HEK293 (cell line): ENCODE measurements at regions of chr20 and their contacts with region 1.

Region 1: GRCh38 chr20:63309261-63310071 is 16.5 kb downstream of the COL20A1 start:
- H3K4me3 ChIP-seq: no peak overlapping the region
- H3K27ac ChIP-seq: no peak overlapping the region
- H3K4me1 ChIP-seq: no peaks in the 10 kb centered on the region
- CTCF ChIP-seq: peak; percentile 86

Region 2: GRCh38 chr20:63134201-63134612 is 175.3 kb before region 1 on chr20:
- CTCF ChIA-PET with region 1: no interaction called
- POLR2A ChIA-PET with region 1: no interaction called
- H3K4me3 ChIP-seq: no peak overlapping the region
- H3K27ac ChIP-seq: no peak overlapping the region
- H3K4me1 ChIP-seq: no peaks in the 10 kb centered on the region
- CTCF ChIP-seq: no peak

Region 3: DNA sequence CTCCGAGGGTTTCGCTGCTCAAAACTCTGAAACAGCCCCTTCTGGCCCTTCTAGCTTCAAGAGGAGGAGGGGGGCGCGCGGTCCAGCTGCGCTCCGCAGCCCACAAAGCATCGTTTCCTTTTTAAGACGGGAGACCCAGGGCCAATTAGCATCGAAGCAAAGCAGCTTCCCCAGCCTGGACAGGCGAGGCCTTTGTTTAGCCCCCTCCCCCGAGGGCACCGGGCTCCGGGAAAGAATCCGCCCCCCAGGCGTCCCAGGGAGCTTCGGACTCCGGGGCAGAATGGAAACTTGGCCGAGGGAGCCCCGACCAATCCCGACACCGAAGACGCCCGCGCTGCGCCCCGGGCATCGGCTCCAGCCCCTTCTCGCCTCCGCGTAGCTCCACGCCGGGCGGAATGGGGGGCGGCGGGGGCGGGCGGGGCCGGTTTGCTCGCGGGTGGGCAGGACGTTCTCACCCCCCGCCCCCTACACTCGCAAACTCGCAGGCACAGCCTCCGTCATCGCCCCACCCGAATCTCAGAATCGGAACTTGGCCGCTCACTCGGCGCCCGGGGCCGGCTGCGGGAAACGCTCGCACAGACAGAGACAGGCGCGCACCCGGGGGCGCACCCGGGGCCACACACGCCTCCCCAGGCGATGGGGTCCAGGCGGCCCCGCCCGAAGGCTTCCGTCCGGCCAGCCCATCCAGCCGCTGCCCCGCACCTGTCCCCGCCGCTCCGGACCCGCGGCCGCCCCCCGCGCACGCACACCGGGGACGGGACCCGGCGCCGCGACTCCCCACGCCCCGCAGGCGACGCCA is 55.8 kb before region 1 on chr20:
- CTCF ChIA-PET with region 1: no interaction called
- POLR2A ChIA-PET with region 1: no interaction called
- H3K4me3 ChIP-seq: peak overlapping the region; percentile 10
- H3K27ac ChIP-seq: no peak overlapping the region
- H3K4me1 ChIP-seq: no peaks in the 10 kb centered on the region
- CTCF ChIP-seq: no peak

Region 4: GRCh38 chr20:63298731-63299312 is 10.6 kb before region 1 on chr20:
- CTCF ChIA-PET with region 1: interaction called, 16 read pairs
- POLR2A ChIA-PET with region 1: no interaction called
- H3K4me3 ChIP-seq: no peak overlapping the region
- H3K27ac ChIP-seq: no peak overlapping the region
- H3K4me1 ChIP-seq: no peaks in the 10 kb centered on the region
- CTCF ChIP-seq: no peak

Region 5: GRCh38 chr20:63321136-63321831 is 11.8 kb after region 1 on chr20:
- CTCF ChIA-PET with region 1: interaction called, 16 read pairs
- POLR2A ChIA-PET with region 1: no interaction called
- H3K4me3 ChIP-seq: no peak overlapping the region
- H3K27ac ChIP-seq: no peak overlapping the region
- H3K4me1 ChIP-seq: no peaks in the 10 kb centered on the region
- CTCF ChIP-seq: no peak

Region 6: GRCh38 chr20:63381807-63382322 is 72.4 kb after region 1 on chr20:
- CTCF ChIA-PET with region 1: interaction called, 89 read pairs
- POLR2A ChIA-PET with region 1: interaction called, 3 read pairs
- H3K4me3 ChIP-seq: no peak overlapping the region
- H3K27ac ChIP-seq: no peak overlapping the region
- H3K4me1 ChIP-seq: no peaks in the 10 kb centered on the region
- CTCF ChIP-seq: peak; percentile 86